ENCODE measurements at regions of chr15 and their contacts with region 1.

Region 1: DNA sequence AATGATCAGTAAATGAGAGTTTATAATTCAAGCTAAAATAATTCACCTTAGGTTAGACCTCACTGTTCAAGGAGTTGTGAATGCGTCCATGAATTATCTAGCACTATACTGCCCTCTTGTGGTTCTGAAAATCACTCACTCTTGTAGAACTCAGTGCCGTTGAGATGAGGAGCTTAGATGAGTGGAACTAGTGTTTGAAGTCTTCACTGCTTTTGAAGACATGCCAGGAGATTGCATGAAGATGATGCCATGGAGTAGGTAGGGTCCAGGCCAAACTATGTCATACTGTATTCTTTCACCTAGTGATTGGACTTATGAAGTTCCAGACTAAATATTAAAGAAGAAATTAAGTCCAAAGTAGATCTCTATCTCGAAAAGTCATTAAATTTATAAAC is 28.8 kb downstream of the LYSMD4 start:
- DNase-seq: no peak
- H3K4me3 Mint-ChIP-seq: no peak overlapping the region
- H3K27ac Mint-ChIP-seq: no peak overlapping the region
- H3K4me1 Mint-ChIP-seq: peaks cover 40% of the 10 kb centered on the region
- H3K27me3 Mint-ChIP-seq: no peaks in the 10 kb centered on the region

Region 2: GRCh38 chr15:99104788-99105513 is 599.5 kb before region 1 on chr15 and contains the start of gene SYNM:
- CTCF ChIA-PET with region 1: interaction called, 10 read pairs
- POLR2A ChIA-PET with region 1: no interaction called
- DNase-seq: peak; percentile 47
- H3K4me3 Mint-ChIP-seq: peak within 1 kb of the TSS; percentile 66
- H3K27ac Mint-ChIP-seq: no peak within 1 kb of the TSS
- H3K4me1 Mint-ChIP-seq: peaks cover 40% of the 10 kb centered on the region
- H3K27me3 Mint-ChIP-seq: peaks cover 43% of the 10 kb centered on the region
- total RNA-seq, gene SYNM: 5.5 to 5.7 TPM

Region 3: DNA sequence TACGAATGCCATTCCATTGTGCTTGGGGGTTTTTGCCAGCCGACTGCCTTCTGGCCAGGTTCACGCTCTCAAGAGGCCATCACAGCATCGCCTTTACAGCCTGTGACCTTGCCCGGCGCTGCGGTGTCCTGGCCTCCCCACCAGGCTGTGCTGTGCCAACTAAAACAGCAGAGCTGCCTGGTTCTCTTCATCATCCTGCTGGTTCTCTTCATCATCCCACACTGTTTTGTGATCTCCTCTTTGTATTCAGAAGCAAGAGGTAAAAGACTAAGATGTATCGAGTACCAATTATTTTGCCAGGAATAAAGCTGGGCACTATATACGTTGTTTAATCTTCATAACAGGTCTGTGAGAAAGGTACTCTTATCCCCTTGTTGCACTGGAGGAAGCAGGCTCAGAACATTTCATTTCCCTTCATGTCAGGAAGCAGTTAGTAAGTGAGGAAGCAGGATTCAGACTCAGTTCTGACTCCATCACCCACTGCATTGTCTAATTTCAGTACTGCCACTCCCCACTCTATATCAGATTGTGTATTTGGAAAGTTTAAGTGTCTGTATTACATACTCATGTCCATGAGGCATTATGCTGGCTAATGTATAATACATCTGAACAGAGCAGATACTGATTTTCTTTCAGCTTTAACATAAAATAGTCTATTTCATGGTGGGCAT is 360.4 kb before region 1 on chr15:
- CTCF ChIA-PET with region 1: interaction called, 14 read pairs
- POLR2A ChIA-PET with region 1: no interaction called
- DNase-seq: peak; percentile 30
- H3K4me3 Mint-ChIP-seq: no peak overlapping the region
- H3K27ac Mint-ChIP-seq: no peak overlapping the region
- H3K4me1 Mint-ChIP-seq: peaks cover 8% of the 10 kb centered on the region
- H3K27me3 Mint-ChIP-seq: no peaks in the 10 kb centered on the region

Region 4: GRCh38 chr15:99565299-99566156 is 138.9 kb before region 1 on chr15 and contains the start of gene MEF2A:
- CTCF ChIA-PET with region 1: interaction called, 37 read pairs
- POLR2A ChIA-PET with region 1: interaction called, 18 read pairs
- DNase-seq: peak; percentile 91
- H3K4me3 Mint-ChIP-seq: peak within 1 kb of the TSS; percentile 97
- H3K27ac Mint-ChIP-seq: peak within 1 kb of the TSS; percentile 91
- H3K4me1 Mint-ChIP-seq: peaks cover 26% of the 10 kb centered on the region
- H3K27me3 Mint-ChIP-seq: peaks cover 15% of the 10 kb centered on the region
- total RNA-seq, gene MEF2A: 24.6 to 24.8 TPM

Region 5: DNA sequence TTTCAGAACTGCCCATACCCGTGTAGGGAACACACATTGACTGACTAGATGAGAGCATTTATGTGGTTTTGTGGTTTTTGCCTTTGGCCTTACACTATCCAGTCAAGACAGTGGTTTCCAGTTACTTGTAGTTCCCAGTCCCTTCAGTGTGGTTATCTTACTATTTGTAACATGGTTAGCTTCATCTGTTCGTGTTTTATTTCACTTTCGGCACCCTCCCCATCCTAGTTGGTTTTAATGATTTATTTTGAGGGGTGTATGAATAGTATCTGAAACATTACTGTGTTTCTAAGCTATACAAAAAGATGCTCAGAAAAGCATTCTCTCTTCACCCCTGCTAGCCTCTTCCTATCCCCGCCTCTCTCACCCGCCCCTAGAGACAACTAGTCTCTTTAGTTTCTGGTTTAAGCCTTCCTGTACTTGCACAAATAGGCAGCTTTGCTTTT is 14.7 kb after region 1 on chr15:
- CTCF ChIA-PET with region 1: interaction called, 22 read pairs
- POLR2A ChIA-PET with region 1: interaction called, 4 read pairs
- DNase-seq: no peak
- H3K4me3 Mint-ChIP-seq: no peak overlapping the region
- H3K27ac Mint-ChIP-seq: no peak overlapping the region
- H3K4me1 Mint-ChIP-seq: peaks cover 34% of the 10 kb centered on the region
- H3K27me3 Mint-ChIP-seq: no peaks in the 10 kb centered on the region

Region 6: GRCh38 chr15:99755692-99756409 is 51.4 kb after region 1 on chr15:
- CTCF ChIA-PET with region 1: interaction called, 20 read pairs
- POLR2A ChIA-PET with region 1: no interaction called
- DNase-seq: peak; percentile 37
- H3K4me3 Mint-ChIP-seq: no peak overlapping the region
- H3K27ac Mint-ChIP-seq: no peak overlapping the region
- H3K4me1 Mint-ChIP-seq: no peaks in the 10 kb centered on the region
- H3K27me3 Mint-ChIP-seq: peaks cover 3% of the 10 kb centered on the region